Endothelial cell of umbilical vein (primary cell): ENCODE measurements at regions of chr1 and their contacts with region 1.

Region 1: GRCh38 chr1:21782868-21783678 is at the start of gene USP48:
- DNase-seq: peak; percentile 96
- H3K4me3 ChIP-seq: peak within 1 kb of the TSS; percentile 86 to 98 (median 97)
- H3K27ac ChIP-seq: peak within 1 kb of the TSS; percentile 99
- H3K4me1 ChIP-seq: peaks cover 6% of the 10 kb centered on the region
- H3K27me3 ChIP-seq: no peaks in the 10 kb centered on the region
- CTCF ChIP-seq: no peak
- POLR2A ChIP-seq: peak; percentile 97
- total RNA-seq, gene USP48: 146 and 149 TPM in 2 replicates

Region 2: GRCh38 chr1:21703318-21703963 is 79.6 kb before region 1 on chr1:
- CTCF ChIA-PET with region 1: interaction called, 28 read pairs
- POLR2A ChIA-PET with region 1: no interaction called
- dilution Hi-C with region 1: no loop called
- intact Hi-C with region 1: loop called (anchors 1 kb)
- DNase-seq: peak; percentile 72
- H3K4me3 ChIP-seq: no peak overlapping the region
- H3K27ac ChIP-seq: peak overlapping the region; percentile 28
- H3K4me1 ChIP-seq: peaks cover 20% of the 10 kb centered on the region
- H3K27me3 ChIP-seq: no peaks in the 10 kb centered on the region
- CTCF ChIP-seq: peak; percentile 42 to 46
- POLR2A ChIP-seq: no peak

Region 3: DNA sequence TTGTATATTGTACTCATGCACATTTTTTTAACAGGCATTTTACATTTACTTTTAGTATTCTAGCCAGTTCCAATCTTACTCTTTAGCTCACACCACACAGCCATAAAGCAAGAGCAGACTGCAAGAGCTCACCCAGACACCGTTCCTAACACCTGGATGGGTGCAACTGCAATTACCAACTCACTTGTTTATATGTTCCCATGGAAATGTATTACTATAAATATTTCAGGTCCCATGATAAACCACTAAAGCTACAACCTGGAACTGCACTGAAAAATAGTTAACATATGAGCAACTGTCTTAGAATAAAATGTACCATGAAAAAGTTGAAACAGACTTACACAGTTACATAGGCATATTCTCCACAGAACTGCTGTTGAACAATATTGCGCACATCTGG is 30.9 kb before region 1 on chr1:
- CTCF ChIA-PET with region 1: interaction called, 15 read pairs
- POLR2A ChIA-PET with region 1: no interaction called
- dilution Hi-C with region 1: no loop called
- intact Hi-C with region 1: no loop called
- DNase-seq: no peak
- H3K4me3 ChIP-seq: no peak overlapping the region
- H3K27ac ChIP-seq: no peak overlapping the region
- H3K4me1 ChIP-seq: no peaks in the 10 kb centered on the region
- H3K27me3 ChIP-seq: no peaks in the 10 kb centered on the region
- CTCF ChIP-seq: no peak
- POLR2A ChIP-seq: no peak

Region 4: DNA sequence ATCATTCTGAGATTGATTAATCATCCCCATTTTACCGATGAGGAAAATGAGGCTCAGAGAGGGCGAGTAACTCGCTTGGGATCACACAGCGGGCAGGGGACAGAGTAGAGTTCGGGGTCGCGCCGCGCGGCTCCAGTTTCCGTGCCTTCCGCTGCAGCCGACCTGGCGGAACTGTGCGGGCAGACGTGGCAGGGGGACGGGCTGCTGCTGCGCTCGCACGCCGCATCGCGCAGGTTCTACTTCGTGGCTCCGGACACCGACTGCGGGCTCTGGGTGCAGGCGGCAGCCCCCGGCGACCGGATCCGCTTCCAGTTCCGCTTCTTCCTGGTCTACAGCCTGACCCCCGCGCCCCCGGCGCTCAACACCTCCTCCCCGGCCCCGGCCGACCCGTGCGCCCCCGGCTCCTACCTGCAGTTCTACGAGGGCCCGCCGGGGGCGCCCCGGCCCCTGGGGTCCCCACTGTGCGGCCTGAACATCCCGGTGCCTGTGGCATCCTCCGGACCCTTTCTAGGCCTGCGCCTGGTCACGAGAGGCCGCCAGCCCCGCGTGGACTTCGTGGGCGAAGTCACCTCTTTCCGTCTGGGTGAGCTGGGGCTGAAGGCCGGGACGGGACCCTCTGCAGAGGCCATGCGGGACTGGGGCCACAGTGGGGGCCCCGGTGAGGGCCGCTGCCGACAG is 31.3 kb after region 1 on chr1:
- CTCF ChIA-PET with region 1: no interaction called
- POLR2A ChIA-PET with region 1: no interaction called
- dilution Hi-C with region 1: no loop called
- intact Hi-C with region 1: loop called (anchors 2 kb)
- DNase-seq: no peak
- H3K4me3 ChIP-seq: no peak overlapping the region
- H3K27ac ChIP-seq: no peak overlapping the region
- H3K4me1 ChIP-seq: peaks cover 29% of the 10 kb centered on the region
- H3K27me3 ChIP-seq: no peaks in the 10 kb centered on the region
- CTCF ChIP-seq: peak; percentile 48 to 71
- POLR2A ChIP-seq: no peak

Region 5: GRCh38 chr1:22025368-22026155 is 242.5 kb after region 1 on chr1:
- CTCF ChIA-PET with region 1: no interaction called
- POLR2A ChIA-PET with region 1: no interaction called
- dilution Hi-C with region 1: no loop called
- intact Hi-C with region 1: loop called (anchors 1 kb)
- DNase-seq: peak; percentile 88
- H3K4me3 ChIP-seq: peak overlapping the region; percentile 50 to 99 (median 77)
- H3K27ac ChIP-seq: peak overlapping the region; percentile 90
- H3K4me1 ChIP-seq: peaks cover 12% of the 10 kb centered on the region
- H3K27me3 ChIP-seq: no peaks in the 10 kb centered on the region
- CTCF ChIP-seq: no peak
- POLR2A ChIP-seq: peak; percentile 86